ENCODE measurements at regions of chr1 and their contacts with region 1.

Region 1: GRCh38 chr1:7770997-7771822 is at the start of gene VAMP3:
- DNase-seq: peak; percentile 86
- ATAC-seq: peak; percentile 96
- H3K4me3 Mint-ChIP-seq: peak within 1 kb of the TSS; percentile 87
- H3K27ac Mint-ChIP-seq: peak within 1 kb of the TSS; percentile 77
- H3K4me1 Mint-ChIP-seq: peaks cover 32% of the 10 kb centered on the region
- H3K27me3 Mint-ChIP-seq: no peaks in the 10 kb centered on the region
- CTCF ChIP-seq: no peak
- total RNA-seq, gene VAMP3: 20.7 and 31.8 TPM in 2 replicates

Region 2: DNA sequence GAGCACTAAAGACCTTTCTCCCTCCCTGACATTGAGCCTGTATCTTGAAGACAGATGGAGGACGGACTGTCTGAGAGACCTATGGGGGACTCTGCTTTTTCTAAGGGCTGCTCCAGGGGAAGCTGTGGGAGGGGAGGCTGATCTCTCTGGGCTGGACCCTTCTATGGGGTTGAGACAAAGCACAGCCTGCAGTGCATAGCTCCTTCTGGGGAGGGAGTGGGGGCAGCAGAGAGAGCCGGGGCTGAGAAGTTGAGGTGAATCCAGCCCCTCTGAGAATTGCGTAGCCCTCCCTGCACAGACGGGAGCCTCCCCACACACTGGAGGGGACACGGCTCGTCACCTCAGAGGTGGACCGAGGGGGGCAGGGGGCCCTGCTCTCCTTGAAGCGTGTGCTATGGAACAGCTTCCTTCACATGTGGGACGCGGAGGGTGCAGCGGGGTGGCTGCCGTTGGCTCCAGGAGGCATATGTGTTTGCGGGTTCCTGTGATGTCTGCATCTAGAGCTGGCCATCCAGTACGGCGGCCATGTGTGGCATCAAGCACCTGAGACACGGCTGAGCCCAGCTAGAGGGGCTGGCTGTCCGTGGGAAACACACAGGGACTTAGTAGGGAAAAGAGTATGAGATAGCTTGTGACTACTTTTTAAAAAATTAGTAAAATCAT is 686.8 kb before region 1 on chr1:
- CTCF ChIA-PET with region 1: no interaction called
- POLR2A ChIA-PET with region 1: no interaction called
- intact Hi-C with region 1: no loop called
- DNase-seq: no peak
- ATAC-seq: no peak
- H3K4me3 Mint-ChIP-seq: no peak overlapping the region
- H3K27ac Mint-ChIP-seq: no peak overlapping the region
- H3K4me1 Mint-ChIP-seq: no peaks in the 10 kb centered on the region
- H3K27me3 Mint-ChIP-seq: no peaks in the 10 kb centered on the region
- CTCF ChIP-seq: no peak

Region 3: GRCh38 chr1:7704214-7705047 is 66.8 kb before region 1 on chr1:
- CTCF ChIA-PET with region 1: no interaction called
- POLR2A ChIA-PET with region 1: no interaction called
- intact Hi-C with region 1: loop called (anchors 1 kb)
- DNase-seq: peak; percentile 99
- ATAC-seq: peak; percentile 98
- H3K4me3 Mint-ChIP-seq: peak overlapping the region; percentile 82
- H3K27ac Mint-ChIP-seq: no peak overlapping the region
- H3K4me1 Mint-ChIP-seq: peaks cover 12% of the 10 kb centered on the region
- H3K27me3 Mint-ChIP-seq: peaks cover 11% of the 10 kb centered on the region
- CTCF ChIP-seq: no peak

Region 4: DNA sequence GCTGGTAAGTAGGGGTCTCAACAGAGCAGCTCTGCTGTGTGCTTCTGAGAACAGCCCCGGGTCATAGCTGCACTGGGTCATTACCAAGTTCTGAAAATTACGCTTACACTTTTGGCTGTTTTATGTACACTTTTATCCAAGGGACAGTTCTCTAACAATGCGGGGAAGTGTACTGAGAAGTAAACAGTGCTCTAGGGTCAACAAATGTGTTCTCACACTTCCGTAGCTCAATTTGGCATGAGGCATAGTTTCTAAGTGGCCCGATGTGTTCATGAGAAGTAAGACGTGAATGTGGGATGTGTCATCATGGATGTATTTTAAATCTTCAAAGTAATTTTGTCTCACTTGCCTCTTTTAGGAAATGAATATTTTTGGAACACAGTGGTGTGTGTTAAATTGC is 11.0 kb before region 1 on chr1:
- CTCF ChIA-PET with region 1: no interaction called
- POLR2A ChIA-PET with region 1: no interaction called
- intact Hi-C with region 1: no loop called
- DNase-seq: no peak
- ATAC-seq: no peak
- H3K4me3 Mint-ChIP-seq: no peak overlapping the region
- H3K27ac Mint-ChIP-seq: no peak overlapping the region
- H3K4me1 Mint-ChIP-seq: no peaks in the 10 kb centered on the region
- H3K27me3 Mint-ChIP-seq: peaks cover under 1% of the 10 kb centered on the region
- CTCF ChIP-seq: no peak

Region 5: DNA sequence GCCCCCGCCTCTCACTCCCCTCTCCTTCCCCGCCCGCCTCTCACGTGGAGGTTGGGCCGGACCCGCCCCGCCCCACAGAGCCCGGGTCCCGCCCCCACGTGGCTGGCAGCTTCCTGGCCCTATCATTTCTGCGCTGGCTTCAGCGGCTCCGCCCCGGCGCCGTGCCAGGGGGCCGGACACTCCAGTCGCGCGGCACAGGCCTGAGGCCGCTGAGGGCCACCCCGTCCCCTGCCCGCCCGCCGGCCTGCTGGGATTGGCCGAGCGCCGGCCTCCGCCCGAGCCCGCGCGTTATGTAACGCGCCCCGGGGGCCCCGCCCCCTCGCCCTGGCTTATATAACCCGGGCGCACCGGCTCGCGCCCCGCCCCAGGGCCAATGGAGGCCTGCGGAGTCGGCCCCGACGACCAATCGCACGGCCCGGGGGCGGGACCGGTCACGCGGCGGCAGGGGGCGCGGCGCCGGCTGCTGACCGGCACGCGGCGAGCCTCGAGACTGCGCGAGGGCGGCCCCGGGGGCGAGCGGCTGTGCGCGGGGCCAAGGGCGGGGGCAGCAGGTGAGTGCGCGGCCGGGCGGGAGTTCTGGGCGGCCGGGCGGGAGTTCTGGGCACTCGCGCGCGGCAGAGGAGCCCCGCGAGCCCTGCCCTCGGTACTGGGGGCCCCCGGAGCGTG is 12.7 kb after region 1 on chr1 and contains the start of gene PER3:
- CTCF ChIA-PET with region 1: no interaction called
- POLR2A ChIA-PET with region 1: interaction called, 13 read pairs
- intact Hi-C with region 1: loop called (anchors 1 kb)
- DNase-seq: peak; percentile 95
- ATAC-seq: peak; percentile 92
- H3K4me3 Mint-ChIP-seq: peak within 1 kb of the TSS; percentile 80
- H3K27ac Mint-ChIP-seq: no peak within 1 kb of the TSS
- H3K4me1 Mint-ChIP-seq: peaks cover 26% of the 10 kb centered on the region
- H3K27me3 Mint-ChIP-seq: no peaks in the 10 kb centered on the region
- CTCF ChIP-seq: no peak
- total RNA-seq, gene PER3: 2.7 and 3.3 TPM in 2 replicates